Aorta (tissue), 5 donors: ENCODE measurements at regions of chr3 and their contacts with region 1.

Region 1: DNA sequence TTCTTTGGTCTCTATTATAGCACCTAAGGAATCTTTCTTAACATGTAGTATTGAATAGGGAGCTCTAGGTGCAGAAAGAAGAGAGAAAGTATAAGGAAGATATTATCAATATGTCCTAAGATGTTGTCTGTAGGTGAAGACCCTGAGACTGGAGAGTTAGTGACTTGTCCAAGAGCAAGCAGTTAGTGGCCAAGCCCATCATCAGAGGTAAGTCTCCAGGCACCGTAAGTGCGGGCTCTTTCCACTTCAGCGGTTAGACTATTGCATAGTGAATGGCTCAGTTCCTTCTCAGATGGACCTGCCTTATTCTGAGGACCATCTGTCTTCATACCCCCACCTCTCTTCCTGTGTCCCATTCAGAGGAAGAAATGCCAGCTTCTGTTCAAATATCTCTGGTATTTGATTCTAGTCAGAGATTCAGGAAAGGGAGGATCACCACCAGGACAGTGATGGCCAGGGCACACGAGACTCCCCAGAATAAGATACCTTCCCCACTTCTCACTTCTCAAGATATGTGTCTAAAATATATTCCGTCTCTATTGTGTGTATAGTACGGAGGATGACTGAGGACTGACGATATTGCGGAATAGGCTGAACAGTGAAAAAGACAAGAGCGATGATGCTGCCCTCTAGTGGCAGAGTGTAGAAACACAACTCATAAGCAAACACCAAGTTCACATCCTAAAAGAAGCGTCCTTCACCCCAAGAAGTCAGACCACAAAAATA is 19.1 kb upstream of the ADGRG7 start:
- DNase-seq: no peak
- ATAC-seq: peak; percentile 92
- H3K4me3 ChIP-seq: no peak overlapping the region
- H3K27ac ChIP-seq: no peak overlapping the region
- H3K4me1 ChIP-seq: no peaks in the 10 kb centered on the region
- H3K27me3 ChIP-seq: no peaks in the 10 kb centered on the region

Region 2: GRCh38 chr3:100316641-100317069 is 273.6 kb before region 1 on chr3:
- intact Hi-C with region 1: loop called (anchors 5 kb)
- DNase-seq: no peak
- ATAC-seq: peak; percentile 83
- H3K4me3 ChIP-seq: no peak overlapping the region
- H3K27ac ChIP-seq: no peak overlapping the region
- H3K4me1 ChIP-seq: no peaks in the 10 kb centered on the region
- H3K27me3 ChIP-seq: no peaks in the 10 kb centered on the region

Region 3: DNA sequence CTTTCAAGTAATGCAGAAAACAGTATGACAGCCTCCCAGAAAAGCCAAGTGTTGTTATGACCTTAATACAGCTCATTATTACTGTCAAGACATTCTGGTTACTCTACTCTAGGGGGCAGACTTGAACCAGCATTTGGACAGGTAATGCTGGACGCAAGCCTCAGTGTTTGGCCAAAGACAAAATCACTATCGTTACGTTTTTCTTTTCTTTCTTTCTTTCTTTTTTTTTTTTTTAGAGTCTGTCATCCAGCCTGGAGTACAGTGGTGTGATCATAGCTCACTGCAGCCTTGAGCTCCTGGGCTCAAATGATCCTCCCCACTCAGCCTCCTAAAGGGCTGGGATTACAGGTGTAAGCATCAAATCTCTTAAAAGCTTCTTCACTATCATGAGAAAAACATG is 127.3 kb before region 1 on chr3:
- intact Hi-C with region 1: loop called (anchors 1 to 2 kb)
- DNase-seq: no peak
- ATAC-seq: peak; percentile 77
- H3K4me3 ChIP-seq: no peak overlapping the region
- H3K27ac ChIP-seq: no peak overlapping the region
- H3K4me1 ChIP-seq: no peaks in the 10 kb centered on the region
- H3K27me3 ChIP-seq: no peaks in the 10 kb centered on the region

Region 4: DNA sequence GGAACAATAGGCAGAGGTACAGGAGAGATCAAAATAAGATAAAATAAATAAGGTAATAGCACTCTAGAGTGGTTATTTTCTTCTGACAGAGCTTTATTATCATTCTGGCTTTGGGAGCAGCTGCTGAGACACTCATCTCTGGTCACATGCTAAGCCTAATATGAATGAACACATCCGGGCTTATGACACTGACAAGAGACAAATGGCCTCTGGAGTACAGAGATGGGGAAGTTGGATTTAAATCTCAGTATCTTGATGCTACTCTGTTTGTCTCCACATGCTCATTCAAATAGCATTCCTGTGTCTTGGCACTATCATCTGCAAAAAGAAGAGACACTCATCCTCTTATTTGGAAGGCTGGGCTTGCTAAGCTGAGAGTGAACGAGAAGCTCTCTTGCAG is 42.2 kb before region 1 on chr3:
- intact Hi-C with region 1: no loop called
- DNase-seq: no peak
- ATAC-seq: no peak
- H3K4me3 ChIP-seq: no peak overlapping the region
- H3K27ac ChIP-seq: no peak overlapping the region
- H3K4me1 ChIP-seq: no peaks in the 10 kb centered on the region
- H3K27me3 ChIP-seq: no peaks in the 10 kb centered on the region